Breast epithelium (tissue), 4 donors: ENCODE measurements at regions of chr11 and their contacts with region 1.

Region 1: DNA sequence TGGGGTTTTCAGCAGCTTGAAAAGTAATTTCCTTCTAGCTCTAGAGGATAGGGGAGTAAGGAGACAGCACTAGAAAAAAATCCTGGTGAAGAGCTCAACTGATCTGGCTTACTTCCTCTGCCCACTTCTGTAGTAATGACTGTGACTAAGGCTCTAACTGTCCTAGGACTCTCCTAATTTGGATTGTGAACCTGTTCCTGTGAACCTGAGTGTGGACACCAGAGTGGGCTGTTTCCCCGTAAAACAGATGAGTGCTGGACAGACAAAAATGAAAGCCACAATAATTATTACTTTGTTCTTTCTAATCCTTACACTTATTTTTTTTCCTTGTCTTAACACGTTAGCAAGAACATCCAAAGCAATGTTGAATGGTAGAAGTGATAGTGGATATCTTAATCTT is 154.1 kb downstream of the AASDHPPT start:
- DNase-seq: no peak
- H3K4me3 ChIP-seq: no peak overlapping the region
- H3K27ac ChIP-seq: no peak overlapping the region
- H3K4me1 ChIP-seq: no peaks in the 10 kb centered on the region
- H3K27me3 ChIP-seq: no peaks in the 10 kb centered on the region
- CTCF ChIP-seq: no peak
- POLR2A ChIP-seq: no peak

Region 2: GRCh38 chr11:106172378-106172991 is 59.1 kb before region 1 on chr11:
- intact Hi-C with region 1: no loop called
- DNase-seq: no peak
- H3K4me3 ChIP-seq: peak overlapping the region in 1 of 3 donors; percentile 31
- H3K27ac ChIP-seq: peak overlapping the region in 1 of 2 donors; percentile 19
- H3K4me1 ChIP-seq: no peaks in the 10 kb centered on the region
- H3K27me3 ChIP-seq: no peaks in the 10 kb centered on the region
- CTCF ChIP-seq: no peak
- POLR2A ChIP-seq: no peak

Region 3: GRCh38 chr11:106216281-106216680 is 15.3 kb before region 1 on chr11:
- intact Hi-C with region 1: loop called (anchors 1 kb)
- DNase-seq: no peak
- H3K4me3 ChIP-seq: no peak overlapping the region
- H3K27ac ChIP-seq: no peak overlapping the region
- H3K4me1 ChIP-seq: no peaks in the 10 kb centered on the region
- H3K27me3 ChIP-seq: no peaks in the 10 kb centered on the region
- CTCF ChIP-seq: no peak
- POLR2A ChIP-seq: no peak

Region 4: DNA sequence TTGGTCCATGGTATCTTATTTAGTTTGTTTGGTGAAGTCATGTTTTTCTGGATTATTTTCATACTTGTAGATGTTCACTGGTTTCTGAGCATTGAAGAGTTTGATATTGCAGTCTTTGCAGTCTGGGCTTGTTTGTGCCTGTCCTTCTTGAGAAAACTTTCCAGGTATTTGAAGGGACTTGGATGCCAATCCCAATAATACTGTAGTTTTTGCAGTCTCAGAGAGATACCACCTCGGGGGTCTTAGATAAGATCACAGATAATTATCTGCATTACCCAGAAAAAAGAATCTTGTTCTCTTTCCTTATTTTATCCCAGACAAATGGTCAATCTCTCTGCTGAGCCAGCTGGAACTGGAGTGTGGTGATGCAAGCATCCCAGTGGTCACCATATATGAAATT is 37.6 kb after region 1 on chr11:
- intact Hi-C with region 1: loop called (anchors 5 kb)
- DNase-seq: no peak
- H3K4me3 ChIP-seq: no peak overlapping the region
- H3K27ac ChIP-seq: no peak overlapping the region
- H3K4me1 ChIP-seq: no peaks in the 10 kb centered on the region
- H3K27me3 ChIP-seq: no peaks in the 10 kb centered on the region
- CTCF ChIP-seq: no peak
- POLR2A ChIP-seq: no peak

Region 5: DNA sequence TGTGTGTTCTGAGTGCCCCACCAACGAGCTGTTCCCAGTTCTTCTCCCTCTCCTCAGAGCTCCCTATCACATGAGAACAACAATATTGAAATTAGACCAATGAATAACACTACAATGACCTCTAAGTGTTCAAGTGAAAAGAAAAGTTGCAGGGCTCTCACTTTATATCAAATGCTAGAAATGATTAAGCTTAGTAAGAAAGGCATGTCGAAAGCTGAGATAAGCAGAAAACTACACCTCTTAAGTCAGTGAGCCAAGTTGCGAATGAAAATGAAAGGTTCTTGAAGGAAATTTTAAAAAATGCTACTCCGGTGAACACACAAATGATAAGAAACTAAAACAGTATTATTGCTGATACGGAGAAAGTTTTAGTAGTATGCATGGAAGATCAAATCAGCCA is 586.9 kb after region 1 on chr11:
- intact Hi-C with region 1: no loop called
- DNase-seq: no peak
- H3K4me3 ChIP-seq: no peak overlapping the region
- H3K27ac ChIP-seq: no peak overlapping the region
- H3K4me1 ChIP-seq: no peaks in the 10 kb centered on the region
- H3K27me3 ChIP-seq: no peaks in the 10 kb centered on the region
- CTCF ChIP-seq: no peak
- POLR2A ChIP-seq: no peak